GM10248 (cell line): ENCODE measurements at regions of chr11 and their contacts with region 1.

Region 1: DNA sequence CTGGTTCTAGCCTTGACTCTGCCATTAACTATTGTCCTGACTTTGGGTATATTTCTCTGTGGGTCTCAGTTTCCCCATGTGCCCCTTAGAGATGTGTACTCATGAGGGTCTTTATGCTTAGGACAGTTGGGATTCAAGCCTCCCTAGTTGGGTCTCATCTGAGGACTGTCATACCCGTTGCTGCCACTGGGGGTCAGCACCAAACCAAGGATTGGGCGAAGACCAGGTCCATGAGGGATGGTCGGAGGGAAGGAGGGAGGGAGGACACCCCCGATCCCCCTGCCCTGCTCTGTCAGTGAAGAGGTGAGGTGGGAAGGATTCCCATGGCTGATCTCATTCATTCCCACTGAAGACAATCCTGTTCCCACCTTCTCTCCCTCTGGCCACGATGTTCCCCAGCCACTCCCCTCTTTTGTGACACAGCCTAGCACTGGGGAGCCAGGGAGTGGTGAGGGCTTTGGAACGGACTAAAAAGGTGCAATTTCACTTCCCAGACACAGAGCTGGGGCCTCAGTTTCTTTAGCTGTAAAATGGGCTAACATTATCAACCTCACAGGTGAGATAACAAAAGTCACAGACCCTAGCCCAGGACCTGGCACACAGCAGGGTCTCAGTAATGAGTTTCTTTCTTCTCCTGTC is 12.4 kb upstream of the KLHL35 start:
- DNase-seq: peak; percentile 80
- CTCF ChIP-seq: peak; percentile 97

Region 2: DNA sequence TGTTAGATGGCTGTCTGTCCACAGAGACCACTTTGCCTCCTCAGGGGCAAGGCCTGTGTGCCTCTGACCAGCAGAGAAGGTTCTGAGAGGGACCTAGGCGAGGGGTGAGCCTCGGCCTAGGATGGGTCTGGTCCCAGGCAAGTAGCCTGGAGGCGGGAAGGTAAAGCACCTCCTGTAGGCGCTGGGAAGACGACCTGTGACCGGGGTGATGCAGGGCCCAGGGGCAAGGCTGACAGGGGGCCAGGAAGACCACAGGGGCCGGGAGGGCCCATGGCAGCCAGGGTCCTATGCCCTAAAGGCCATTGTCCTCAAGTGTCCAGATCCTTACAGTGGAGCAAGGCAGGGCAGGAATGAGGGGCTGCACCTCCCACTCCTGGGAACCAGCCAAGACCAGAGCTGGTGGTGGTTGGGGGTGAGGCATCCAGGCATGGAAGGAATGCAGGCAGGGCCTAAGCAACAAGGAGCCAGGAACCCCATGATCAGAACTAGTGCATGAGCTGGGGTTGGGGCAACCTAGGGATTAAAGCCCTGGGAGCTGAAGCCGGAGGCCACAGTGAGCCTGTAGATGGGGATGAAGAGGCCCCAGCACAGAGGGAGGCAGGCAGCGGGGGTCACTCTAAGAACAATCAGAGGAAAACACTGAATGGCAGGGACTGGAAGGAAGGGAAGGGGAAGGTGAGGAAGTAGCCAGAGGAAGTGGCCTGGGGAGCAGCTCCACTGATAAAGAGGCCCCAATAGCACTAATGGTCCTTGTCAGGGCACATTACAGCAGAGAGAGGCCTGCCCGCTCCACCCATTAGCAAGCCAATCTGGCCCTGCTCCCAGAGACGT is 20.5 kb after region 1 on chr11:
- CTCF ChIA-PET with region 1: interaction called, 11 read pairs
- POLR2A ChIA-PET with region 1: no interaction called
- DNase-seq: no peak
- CTCF ChIP-seq: no peak

Region 3: GRCh38 chr11:75471176-75471973 is 25.9 kb after region 1 on chr11:
- CTCF ChIA-PET with region 1: interaction called, 11 read pairs
- POLR2A ChIA-PET with region 1: no interaction called
- DNase-seq: no peak
- CTCF ChIP-seq: no peak

Region 4: DNA sequence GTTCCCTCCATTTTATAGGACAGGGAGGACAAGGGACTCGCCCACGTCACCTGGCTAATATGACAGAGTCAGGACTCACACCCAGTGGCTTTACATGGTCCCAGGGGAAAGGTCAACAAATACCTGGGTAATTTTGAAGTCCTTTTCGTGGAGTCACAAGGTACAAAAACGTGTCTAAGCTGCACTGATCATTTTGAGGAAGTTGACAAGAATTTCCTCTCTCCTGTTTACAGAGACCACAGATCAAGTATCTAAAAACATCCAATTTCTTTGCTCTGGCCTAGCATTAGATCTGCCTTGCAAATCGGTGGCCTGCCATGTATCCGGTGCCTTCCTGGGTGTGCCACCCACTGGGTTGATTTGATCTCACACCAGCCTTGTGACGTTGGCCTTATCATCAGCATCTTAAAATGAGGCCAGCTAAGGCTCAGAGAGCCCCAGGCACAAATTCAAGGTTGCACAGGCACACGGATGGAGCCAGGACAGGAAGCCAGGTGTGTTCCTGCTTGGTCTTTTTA is 62.7 kb after region 1 on chr11:
- CTCF ChIA-PET with region 1: interaction called, 10 read pairs
- POLR2A ChIA-PET with region 1: no interaction called
- DNase-seq: peak; percentile 50
- CTCF ChIP-seq: no peak

Region 5: GRCh38 chr11:75525596-75526541 is 80.4 kb after region 1 on chr11 and contains the start of gene GDPD5:
- CTCF ChIA-PET with region 1: interaction called, 164 read pairs
- POLR2A ChIA-PET with region 1: no interaction called
- DNase-seq: peak; percentile 96
- CTCF ChIP-seq: peak; percentile 79

Region 6: GRCh38 chr11:75532200-75533048 is 87.0 kb after region 1 on chr11:
- CTCF ChIA-PET with region 1: interaction called, 164 read pairs
- POLR2A ChIA-PET with region 1: no interaction called
- DNase-seq: peak; percentile 70
- CTCF ChIP-seq: peak; percentile 86